Activated CD4-positive, alpha-beta T cell treated with anti-CD3 and anti-CD28 coated beads for 36 hours (primary cell): ENCODE measurements at regions of chr10 and their contacts with region 1.

Region 1: DNA sequence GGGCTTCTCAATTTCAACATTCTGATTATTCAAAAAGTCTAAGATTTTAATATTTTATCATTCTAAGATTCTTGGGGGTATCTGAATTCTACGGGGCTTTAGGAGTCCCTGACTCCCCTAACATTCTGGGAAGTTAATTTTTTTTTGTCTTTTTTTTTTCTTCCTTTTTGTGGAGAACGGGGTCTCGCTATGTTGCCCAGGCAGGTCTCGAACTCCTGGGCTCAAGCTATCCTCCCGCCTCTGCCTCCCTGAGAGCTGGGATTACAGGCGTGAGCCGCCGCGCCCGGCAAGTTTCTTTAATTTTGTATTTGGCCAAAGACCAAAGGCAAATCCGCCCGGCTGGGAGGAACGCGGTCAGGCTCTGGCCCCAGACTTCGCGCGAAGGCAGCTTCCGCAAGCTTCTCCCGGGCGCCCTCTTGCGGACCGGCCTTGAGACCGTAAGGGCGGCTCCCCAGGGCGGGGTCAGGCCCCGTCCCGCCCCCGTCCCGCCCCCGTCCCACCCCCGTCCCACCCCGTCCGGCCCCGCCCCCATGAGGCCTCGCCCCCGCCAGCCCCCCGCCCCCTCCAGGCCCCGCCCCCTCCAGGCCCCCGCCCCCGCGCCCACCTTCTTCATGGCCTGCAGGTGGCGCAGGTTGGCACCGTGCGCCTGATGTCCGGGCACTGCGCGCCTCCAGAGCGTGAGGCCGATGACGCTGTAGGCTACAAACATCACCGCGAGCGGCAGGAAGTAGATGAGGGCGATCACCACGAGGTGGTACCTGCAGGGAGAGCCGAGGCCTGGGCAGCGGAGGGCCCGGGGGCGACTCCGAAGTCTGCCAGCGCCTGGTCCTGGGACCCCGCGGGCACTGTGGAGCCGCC is 8.2 kb downstream of the TACR2 start:
- DNase-seq: peak; percentile 95
- ATAC-seq: peak; percentile 93
- H3K4me3 Mint-ChIP-seq: no peak overlapping the region
- H3K27ac Mint-ChIP-seq: peak overlapping the region; percentile 67
- H3K4me1 Mint-ChIP-seq: peaks cover 11% of the 10 kb centered on the region
- H3K27me3 Mint-ChIP-seq: no peaks in the 10 kb centered on the region

Region 2: DNA sequence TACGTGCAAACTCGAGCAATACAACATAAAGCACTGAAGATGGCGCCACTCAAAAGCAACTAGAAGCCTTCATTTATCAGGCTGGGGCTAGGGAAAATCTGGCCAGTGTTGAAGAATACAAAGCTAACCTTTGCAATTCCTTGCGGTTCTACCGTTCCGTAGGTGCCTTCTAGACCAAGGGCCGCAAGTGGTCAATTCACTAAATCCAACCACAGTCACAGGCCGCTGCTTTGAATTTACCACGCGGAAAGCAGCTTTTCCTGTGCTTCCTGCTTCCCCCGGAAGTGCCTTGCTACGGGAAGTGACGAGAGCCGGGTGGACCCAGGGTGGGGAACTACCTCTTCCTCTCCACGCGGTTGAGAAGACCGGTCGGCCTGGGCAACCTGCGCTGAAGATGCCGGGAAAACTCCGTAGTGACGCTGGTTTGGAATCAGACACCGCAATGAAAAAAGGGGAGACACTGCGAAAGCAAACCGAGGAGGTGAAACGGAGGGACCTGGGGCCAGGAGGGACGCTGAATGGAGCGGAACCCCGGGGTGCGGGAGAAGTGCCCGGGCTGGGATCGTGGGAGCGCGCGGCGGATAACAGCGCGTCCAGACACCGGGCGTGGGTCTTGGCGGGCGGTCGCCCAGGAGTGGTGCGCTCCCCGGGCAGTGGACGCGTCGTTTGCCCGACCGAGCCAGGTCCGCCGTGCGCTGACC is 452.6 kb before region 1 on chr10 and contains the start of gene DDX21:
- CTCF ChIA-PET with region 1: no interaction called
- POLR2A ChIA-PET with region 1: no interaction called
- intact Hi-C with region 1: loop called in 1 of 2 experiments (anchors 1 kb)
- DNase-seq: peak; percentile 94
- ATAC-seq: peak; percentile 85
- H3K4me3 Mint-ChIP-seq: peak within 1 kb of the TSS; percentile 98
- H3K27ac Mint-ChIP-seq: peak within 1 kb of the TSS; percentile 100
- H3K4me1 Mint-ChIP-seq: peaks cover 35% of the 10 kb centered on the region
- H3K27me3 Mint-ChIP-seq: no peaks in the 10 kb centered on the region
- total RNA-seq, gene DDX21: 187 to 192 TPM

Region 3: DNA sequence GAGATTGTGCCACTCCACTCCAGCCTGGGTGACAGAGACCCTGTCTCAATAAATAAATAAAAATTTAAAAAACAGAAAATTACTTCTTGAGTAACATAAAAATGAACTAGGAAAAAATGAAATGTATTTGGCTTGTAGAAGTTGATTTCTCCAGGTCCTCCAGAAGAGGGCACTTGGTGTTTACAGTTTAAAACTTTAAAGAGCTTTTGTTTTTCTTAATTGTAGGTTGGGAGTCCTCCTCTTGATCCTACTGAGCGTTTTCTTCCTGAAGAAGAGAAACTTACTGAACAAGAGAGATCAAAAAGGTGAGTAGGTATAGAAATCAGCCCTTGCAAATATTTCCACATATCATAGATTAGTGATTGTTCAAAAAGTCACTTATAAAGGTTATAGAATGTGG is 403.7 kb before region 1 on chr10:
- CTCF ChIA-PET with region 1: no interaction called
- POLR2A ChIA-PET with region 1: no interaction called
- intact Hi-C with region 1: loop called in 1 of 2 experiments (anchors 10 kb)
- DNase-seq: no peak
- ATAC-seq: peak; percentile 78
- H3K4me3 Mint-ChIP-seq: no peak overlapping the region
- H3K27ac Mint-ChIP-seq: no peak overlapping the region
- H3K4me1 Mint-ChIP-seq: peaks cover 10% of the 10 kb centered on the region
- H3K27me3 Mint-ChIP-seq: no peaks in the 10 kb centered on the region

Region 4: GRCh38 chr10:69222157-69223027 is 186.2 kb before region 1 on chr10:
- CTCF ChIA-PET with region 1: interaction called, 4 read pairs
- POLR2A ChIA-PET with region 1: no interaction called
- intact Hi-C with region 1: loop called in 1 of 2 experiments (anchors 1 kb)
- DNase-seq: peak; percentile 90
- ATAC-seq: peak; percentile 92
- H3K4me3 Mint-ChIP-seq: peak overlapping the region; percentile 52
- H3K27ac Mint-ChIP-seq: peak overlapping the region; percentile 91
- H3K4me1 Mint-ChIP-seq: peaks cover 32% of the 10 kb centered on the region
- H3K27me3 Mint-ChIP-seq: no peaks in the 10 kb centered on the region

Region 5: GRCh38 chr10:69242852-69243212 is 165.7 kb before region 1 on chr10:
- CTCF ChIA-PET with region 1: interaction called, 15 read pairs
- POLR2A ChIA-PET with region 1: no interaction called
- intact Hi-C with region 1: loop called in 1 of 2 experiments (anchors 5 kb)
- DNase-seq: no peak
- ATAC-seq: no peak
- H3K4me3 Mint-ChIP-seq: no peak overlapping the region
- H3K27ac Mint-ChIP-seq: no peak overlapping the region
- H3K4me1 Mint-ChIP-seq: peaks cover 3% of the 10 kb centered on the region
- H3K27me3 Mint-ChIP-seq: no peaks in the 10 kb centered on the region

Region 6: DNA sequence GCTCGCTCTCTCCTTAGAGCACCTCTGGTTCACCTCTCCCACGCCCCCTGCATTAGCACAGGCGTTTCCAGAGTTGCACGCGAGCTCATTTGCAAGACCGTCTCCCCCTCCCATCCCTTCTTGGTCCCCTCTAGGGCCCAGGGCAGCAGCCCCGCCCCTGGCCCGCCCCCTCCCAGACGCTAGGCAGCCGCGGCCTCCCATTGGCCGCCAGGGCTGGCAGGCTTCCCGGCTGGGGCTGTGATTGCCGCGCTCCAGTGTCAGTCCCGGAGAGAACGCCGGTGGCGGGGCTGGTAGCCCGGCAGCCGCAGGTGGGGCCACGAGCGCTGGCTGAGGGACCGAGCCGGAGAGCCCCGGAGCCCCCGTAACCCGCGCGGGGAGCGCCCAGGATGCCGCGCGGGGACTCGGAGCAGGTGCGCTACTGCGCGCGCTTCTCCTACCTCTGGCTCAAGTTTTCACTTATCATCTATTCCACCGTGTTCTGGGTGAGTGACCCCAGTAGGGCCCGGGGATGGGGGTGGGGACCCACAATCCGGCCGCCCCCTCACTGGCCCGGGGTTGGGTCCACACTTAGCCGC is 42.7 kb after region 1 on chr10 and contains the start of gene TSPAN15:
- CTCF ChIA-PET with region 1: interaction called, 4 read pairs
- POLR2A ChIA-PET with region 1: no interaction called
- intact Hi-C with region 1: loop called in 1 of 2 experiments (anchors 1 kb)
- DNase-seq: peak; percentile 87
- ATAC-seq: peak; percentile 96
- H3K4me3 Mint-ChIP-seq: peak within 1 kb of the TSS; percentile 75
- H3K27ac Mint-ChIP-seq: no peak within 1 kb of the TSS
- H3K4me1 Mint-ChIP-seq: peaks cover 13% of the 10 kb centered on the region
- H3K27me3 Mint-ChIP-seq: peaks cover 4% of the 10 kb centered on the region
- total RNA-seq, gene TSPAN15: 0.85 to 0.91 TPM

Region 7: GRCh38 chr10:69629897-69630650 is 221.5 kb after region 1 on chr10 and contains the start of gene FAM241B:
- CTCF ChIA-PET with region 1: no interaction called
- POLR2A ChIA-PET with region 1: no interaction called
- intact Hi-C with region 1: loop called (anchors 1 to 5 kb)
- DNase-seq: peak; percentile 89
- ATAC-seq: peak; percentile 95
- H3K4me3 Mint-ChIP-seq: peak within 1 kb of the TSS; percentile 63
- H3K27ac Mint-ChIP-seq: peak within 1 kb of the TSS; percentile 47
- H3K4me1 Mint-ChIP-seq: peaks cover 16% of the 10 kb centered on the region
- H3K27me3 Mint-ChIP-seq: no peaks in the 10 kb centered on the region
- total RNA-seq, gene FAM241B: 6.3 to 9.6 TPM